Activated CD8-positive, alpha-beta T cell treated with anti-CD3 and anti-CD28 coated beads for 36 hours (primary cell): ENCODE measurements at regions of chr6 and their contacts with region 1.

Region 1: GRCh38 chr6:43667245-43668150 is 20.1 kb downstream of the MRPS18A start:
- DNase-seq: peak; percentile 92
- ATAC-seq: peak; percentile 57
- H3K4me3 Mint-ChIP-seq: peak overlapping the region; percentile 49
- H3K27ac Mint-ChIP-seq: peak overlapping the region; percentile 82
- H3K4me1 Mint-ChIP-seq: peaks cover 45% of the 10 kb centered on the region
- H3K27me3 Mint-ChIP-seq: peaks cover 1% of the 10 kb centered on the region
- CTCF ChIP-seq: peak; percentile 95

Region 2: GRCh38 chr6:43644931-43645612 is 22.4 kb before region 1 on chr6 and contains the start of gene RSPH9:
- CTCF ChIA-PET with region 1: interaction called, 38 read pairs
- POLR2A ChIA-PET with region 1: interaction called, 5 read pairs
- intact Hi-C with region 1: no loop called
- DNase-seq: peak; percentile 84
- ATAC-seq: peak; percentile 94
- H3K4me3 Mint-ChIP-seq: peak within 1 kb of the TSS; percentile 71
- H3K27ac Mint-ChIP-seq: peak within 1 kb of the TSS; percentile 17
- H3K4me1 Mint-ChIP-seq: peaks cover 14% of the 10 kb centered on the region
- H3K27me3 Mint-ChIP-seq: no peaks in the 10 kb centered on the region
- CTCF ChIP-seq: no peak
- total RNA-seq, gene RSPH9: 0.11 TPM in 1 of 2 experiments, not detected in the other

Region 3: GRCh38 chr6:43679057-43679456 is 11.6 kb after region 1 on chr6:
- CTCF ChIA-PET with region 1: interaction called, 17 read pairs
- POLR2A ChIA-PET with region 1: interaction called, 8 read pairs
- intact Hi-C with region 1: no loop called
- DNase-seq: no peak
- ATAC-seq: no peak
- H3K4me3 Mint-ChIP-seq: no peak overlapping the region
- H3K27ac Mint-ChIP-seq: no peak overlapping the region
- H3K4me1 Mint-ChIP-seq: peaks cover 13% of the 10 kb centered on the region
- H3K27me3 Mint-ChIP-seq: no peaks in the 10 kb centered on the region
- CTCF ChIP-seq: no peak

Region 4: GRCh38 chr6:43723737-43724295 is 56.3 kb after region 1 on chr6:
- CTCF ChIA-PET with region 1: interaction called, 22 read pairs
- POLR2A ChIA-PET with region 1: no interaction called
- intact Hi-C with region 1: no loop called
- DNase-seq: peak; percentile 89
- ATAC-seq: peak; percentile 76
- H3K4me3 Mint-ChIP-seq: peak overlapping the region; percentile 52
- H3K27ac Mint-ChIP-seq: peak overlapping the region; percentile 91
- H3K4me1 Mint-ChIP-seq: peaks cover 35% of the 10 kb centered on the region
- H3K27me3 Mint-ChIP-seq: no peaks in the 10 kb centered on the region
- CTCF ChIP-seq: peak; percentile 71

Region 5: DNA sequence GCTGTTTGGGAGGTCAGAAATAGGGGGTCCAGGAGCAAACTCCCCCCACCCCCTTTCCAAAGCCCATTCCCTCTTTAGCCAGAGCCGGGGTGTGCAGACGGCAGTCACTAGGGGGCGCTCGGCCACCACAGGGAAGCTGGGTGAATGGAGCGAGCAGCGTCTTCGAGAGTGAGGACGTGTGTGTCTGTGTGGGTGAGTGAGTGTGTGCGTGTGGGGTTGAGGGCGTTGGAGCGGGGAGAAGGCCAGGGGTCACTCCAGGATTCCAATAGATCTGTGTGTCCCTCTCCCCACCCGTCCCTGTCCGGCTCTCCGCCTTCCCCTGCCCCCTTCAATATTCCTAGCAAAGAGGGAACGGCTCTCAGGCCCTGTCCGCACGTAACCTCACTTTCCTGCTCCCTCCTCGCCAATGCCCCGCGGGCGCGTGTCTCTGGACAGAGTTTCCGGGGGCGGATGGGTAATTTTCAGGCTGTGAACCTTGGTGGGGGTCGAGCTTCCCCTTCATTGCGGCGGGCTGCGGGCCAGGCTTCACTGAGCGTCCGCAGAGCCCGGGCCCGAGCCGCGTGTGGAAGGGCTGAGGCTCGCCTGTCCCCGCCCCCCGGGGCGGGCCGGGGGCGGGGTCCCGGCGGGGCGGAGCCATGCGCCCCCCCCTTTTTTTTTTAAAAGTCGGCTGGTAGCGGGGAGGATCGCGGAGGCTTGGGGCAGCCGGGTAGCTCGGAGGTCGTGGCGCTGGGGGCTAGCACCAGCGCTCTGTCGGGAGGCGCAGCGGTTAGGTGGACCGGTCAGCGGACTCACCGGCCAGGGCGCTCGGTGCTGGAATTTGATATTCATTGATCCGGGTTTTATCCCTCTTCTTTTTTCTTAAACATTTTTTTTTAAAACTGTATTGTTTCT is 102.3 kb after region 1 on chr6 and contains the start of gene VEGFA:
- CTCF ChIA-PET with region 1: interaction called, 43 read pairs
- POLR2A ChIA-PET with region 1: interaction called, 13 read pairs
- intact Hi-C with region 1: loop called (anchors 5 kb)
- DNase-seq: peak; percentile 94
- ATAC-seq: peak; percentile 73
- H3K4me3 Mint-ChIP-seq: peak within 1 kb of the TSS; percentile 97
- H3K27ac Mint-ChIP-seq: peak within 1 kb of the TSS; percentile 93
- H3K4me1 Mint-ChIP-seq: peaks cover 24% of the 10 kb centered on the region
- H3K27me3 Mint-ChIP-seq: peaks cover 2% of the 10 kb centered on the region
- CTCF ChIP-seq: peak; percentile 98
- total RNA-seq, gene VEGFA: 93.7 to 104 TPM

Region 6: GRCh38 chr6:44074439-44075136 is 407.1 kb after region 1 on chr6:
- CTCF ChIA-PET with region 1: interaction called, 44 read pairs
- POLR2A ChIA-PET with region 1: interaction called, 4 read pairs
- intact Hi-C with region 1: loop called (anchors 1 kb)
- DNase-seq: peak; percentile 96
- ATAC-seq: peak; percentile 71
- H3K4me3 Mint-ChIP-seq: peak overlapping the region; percentile 98
- H3K27ac Mint-ChIP-seq: peak overlapping the region; percentile 90
- H3K4me1 Mint-ChIP-seq: peaks cover 25% of the 10 kb centered on the region
- H3K27me3 Mint-ChIP-seq: peaks cover 16% of the 10 kb centered on the region
- CTCF ChIP-seq: peak; percentile 89